Endothelial cell of umbilical vein (primary cell): ENCODE measurements at regions of chr12 and their contacts with region 1.

Region 1: GRCh38 chr12:49288412-49288853 is 6.5 kb upstream of the PRPH start:
- DNase-seq: peak; percentile 57
- H3K4me3 ChIP-seq: no peak overlapping the region
- H3K27ac ChIP-seq: no peak overlapping the region
- H3K4me1 ChIP-seq: peaks cover 2% of the 10 kb centered on the region
- H3K27me3 ChIP-seq: peaks cover 4 to 9% of the 10 kb centered on the region in 2 experiments
- CTCF ChIP-seq: peak; percentile 75 to 80
- POLR2A ChIP-seq: no peak

Region 2: DNA sequence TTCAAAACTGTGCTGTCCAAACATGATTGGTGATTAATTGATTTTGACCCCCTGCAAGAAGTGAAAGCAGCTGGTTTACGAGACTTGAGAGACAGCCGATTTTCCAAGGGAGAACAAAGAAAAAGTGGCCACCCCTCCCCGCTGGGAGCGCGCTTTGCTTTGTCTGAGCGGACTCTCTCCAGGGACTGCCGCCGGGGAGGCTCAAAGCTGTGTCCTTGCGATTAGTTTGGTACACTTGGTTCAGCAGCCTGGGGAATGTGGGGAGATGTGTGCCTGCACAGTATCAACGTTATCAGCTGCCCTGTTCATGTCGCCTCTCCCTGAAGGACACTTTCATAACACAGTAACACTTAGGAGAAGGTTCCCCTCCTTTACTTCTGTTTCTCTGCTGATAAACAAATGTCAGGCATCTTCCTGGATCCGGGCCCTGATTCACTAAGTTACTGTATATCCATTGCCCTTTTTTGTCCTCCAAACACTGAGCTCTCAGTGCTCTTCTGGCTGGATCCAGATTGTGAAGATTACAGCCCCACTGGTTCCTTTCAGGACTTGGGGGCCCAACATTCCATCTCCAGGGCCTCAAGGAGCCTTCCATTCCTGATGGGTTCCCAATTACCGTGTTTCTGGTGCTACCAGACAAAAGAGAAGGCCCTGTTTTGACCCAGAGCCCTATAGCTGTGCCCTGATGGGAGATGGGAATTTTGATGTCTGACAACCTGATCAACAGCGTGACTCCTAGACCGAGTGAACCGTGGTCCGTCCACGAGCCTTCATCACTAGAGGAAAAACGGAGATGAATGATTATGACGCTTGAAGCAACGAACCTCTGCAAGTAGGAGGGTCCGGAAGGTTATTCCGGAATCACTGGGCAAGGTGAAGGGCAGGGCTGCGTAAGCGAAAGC is 55.2 kb before region 1 on chr12:
- CTCF ChIA-PET with region 1: no interaction called
- POLR2A ChIA-PET with region 1: no interaction called
- dilution Hi-C with region 1: no loop called
- intact Hi-C with region 1: no loop called
- DNase-seq: peak; percentile 71
- H3K4me3 ChIP-seq: peak overlapping the region in 1 of 3 experiments; percentile 5
- H3K27ac ChIP-seq: no peak overlapping the region
- H3K4me1 ChIP-seq: peaks cover 12% of the 10 kb centered on the region
- H3K27me3 ChIP-seq: no peaks in the 10 kb centered on the region
- CTCF ChIP-seq: peak in 1 of 2 donors; percentile 34
- POLR2A ChIP-seq: no peak

Region 3: GRCh38 chr12:49244176-49244575 is 44.3 kb before region 1 on chr12:
- CTCF ChIA-PET with region 1: no interaction called
- POLR2A ChIA-PET with region 1: no interaction called
- dilution Hi-C with region 1: no loop called
- intact Hi-C with region 1: no loop called
- DNase-seq: no peak
- H3K4me3 ChIP-seq: no peak overlapping the region
- H3K27ac ChIP-seq: no peak overlapping the region
- H3K4me1 ChIP-seq: no peaks in the 10 kb centered on the region
- H3K27me3 ChIP-seq: no peaks in the 10 kb centered on the region
- CTCF ChIP-seq: no peak
- POLR2A ChIP-seq: no peak

Region 4: GRCh38 chr12:49276304-49277014 is 12.0 kb before region 1 on chr12:
- CTCF ChIA-PET with region 1: interaction called, 13 read pairs
- POLR2A ChIA-PET with region 1: no interaction called
- dilution Hi-C with region 1: no loop called
- intact Hi-C with region 1: no loop called
- DNase-seq: no peak
- H3K4me3 ChIP-seq: no peak overlapping the region
- H3K27ac ChIP-seq: no peak overlapping the region
- H3K4me1 ChIP-seq: no peaks in the 10 kb centered on the region
- H3K27me3 ChIP-seq: no peaks in the 10 kb centered on the region
- CTCF ChIP-seq: no peak
- POLR2A ChIP-seq: no peak

Region 5: GRCh38 chr12:49322708-49323523 is 34.5 kb after region 1 on chr12 and contains the start of gene TROAP:
- CTCF ChIA-PET with region 1: interaction called, 14 read pairs
- POLR2A ChIA-PET with region 1: no interaction called
- dilution Hi-C with region 1: no loop called
- intact Hi-C with region 1: no loop called
- DNase-seq: peak; percentile 99
- H3K4me3 ChIP-seq: peak within 1 kb of the TSS; percentile 59 to 90 (median 73)
- H3K27ac ChIP-seq: peak within 1 kb of the TSS; percentile 58
- H3K4me1 ChIP-seq: peaks cover 12% of the 10 kb centered on the region
- H3K27me3 ChIP-seq: no peaks in the 10 kb centered on the region
- CTCF ChIP-seq: no peak
- POLR2A ChIP-seq: peak; percentile 52
- total RNA-seq, gene TROAP: 62.4 and 68.6 TPM in 2 replicates

Region 6: DNA sequence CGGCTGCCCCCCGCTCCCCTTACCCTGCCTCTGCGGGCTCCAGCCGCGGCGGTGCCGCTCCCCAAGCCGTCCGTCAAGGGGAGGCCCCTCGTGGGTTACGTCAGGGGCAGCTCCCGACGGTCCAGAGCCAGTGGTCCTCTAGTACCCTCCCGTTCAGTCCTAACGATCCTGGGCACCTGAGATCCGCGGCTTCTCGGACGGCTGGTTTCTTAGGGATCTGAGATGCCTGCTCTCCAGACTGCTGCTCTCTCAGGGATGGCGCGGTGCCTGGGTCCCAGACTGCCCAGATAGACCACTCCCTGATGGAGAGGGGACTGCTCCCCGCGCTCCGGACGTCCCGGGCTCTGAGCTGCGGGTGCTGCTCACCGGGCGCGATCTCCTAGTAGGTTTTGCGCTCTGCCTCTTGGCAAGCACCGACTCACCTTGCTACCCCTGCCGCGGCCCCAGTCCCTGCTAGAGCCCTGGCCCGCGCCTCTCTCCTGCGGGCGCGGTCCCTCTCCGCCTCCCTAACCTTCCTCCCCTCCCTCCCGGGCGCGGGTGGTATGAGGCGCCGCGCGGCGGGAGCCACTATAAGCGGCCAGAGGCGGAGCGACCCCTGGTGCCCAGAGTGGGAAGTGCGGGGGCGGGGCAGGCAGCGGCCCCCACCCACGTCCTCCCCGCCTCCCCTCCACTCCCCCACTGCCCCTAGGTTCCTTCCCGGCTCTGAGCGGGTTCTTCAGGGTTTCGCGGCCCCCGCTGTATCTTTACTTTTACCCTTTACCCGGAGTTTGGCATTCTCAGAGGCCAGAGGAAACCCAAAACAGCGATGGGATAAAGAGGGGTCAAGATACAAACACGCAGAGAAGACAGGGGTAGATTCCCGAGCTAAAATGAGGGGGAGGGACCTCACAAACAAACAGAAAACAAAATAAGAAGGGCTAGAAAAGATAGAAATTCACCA is 48.5 kb after region 1 on chr12 and contains the start of gene C1QL4:
- CTCF ChIA-PET with region 1: interaction called, 58 read pairs
- POLR2A ChIA-PET with region 1: no interaction called
- dilution Hi-C with region 1: no loop called
- intact Hi-C with region 1: loop called (anchors 1 kb)
- DNase-seq: peak; percentile 69
- H3K4me3 ChIP-seq: peak within 1 kb of the TSS in 1 of 3 experiments; percentile 20
- H3K27ac ChIP-seq: no peak within 1 kb of the TSS
- H3K4me1 ChIP-seq: no peaks in the 10 kb centered on the region
- H3K27me3 ChIP-seq: peaks cover 59 to 70% of the 10 kb centered on the region in 2 experiments
- CTCF ChIP-seq: peak; percentile 64 to 97
- POLR2A ChIP-seq: no peak
- total RNA-seq, gene C1QL4: not detected in 2 replicates

Region 7: DNA sequence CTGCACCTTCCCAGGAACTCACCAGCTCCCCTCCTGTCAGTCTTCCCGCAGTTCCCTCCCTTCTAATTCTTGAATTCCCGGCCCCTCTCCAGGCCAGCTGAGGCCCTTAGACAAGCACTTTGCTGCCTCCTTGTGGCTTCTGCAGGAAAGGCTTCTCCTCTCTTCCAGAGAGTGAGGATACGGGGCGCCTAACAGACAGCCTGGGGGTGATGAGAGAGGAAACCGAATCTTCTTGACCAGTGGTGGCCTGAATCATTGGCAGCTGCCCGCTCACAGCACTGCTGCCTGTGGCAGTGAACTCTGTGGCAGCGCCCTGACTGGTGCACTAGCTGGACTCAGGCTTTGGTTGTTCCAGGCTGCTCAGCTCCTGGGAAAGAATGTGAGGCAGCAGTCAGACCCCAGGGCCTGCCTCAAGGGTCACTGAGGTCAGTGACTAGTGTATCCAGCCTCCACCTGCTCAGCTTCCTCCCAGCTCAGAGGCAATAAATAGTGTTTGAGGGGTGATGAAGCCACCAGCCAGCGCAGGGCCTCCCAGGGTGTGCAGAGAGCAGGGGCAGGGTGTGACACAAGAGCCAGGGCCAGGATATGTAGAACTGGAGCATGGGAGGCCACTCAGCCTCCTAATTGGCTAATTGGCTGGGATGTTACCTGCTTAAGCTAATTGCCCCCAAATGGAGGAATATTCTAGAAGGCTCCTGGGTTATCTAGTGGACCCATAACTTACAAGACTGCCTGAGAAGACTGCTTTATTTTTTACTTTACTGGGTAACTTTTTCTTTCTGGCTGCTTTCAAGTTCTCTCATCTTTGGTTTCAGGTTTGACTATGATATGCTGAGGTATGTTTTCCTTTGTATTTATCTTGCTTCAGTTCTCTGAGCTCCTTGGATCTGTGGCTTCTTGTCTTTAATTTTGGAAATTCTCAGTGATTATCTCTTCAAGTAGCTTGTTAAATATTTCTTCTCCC is 292.4 kb after region 1 on chr12:
- CTCF ChIA-PET with region 1: interaction called, 28 read pairs
- POLR2A ChIA-PET with region 1: no interaction called
- dilution Hi-C with region 1: no loop called
- intact Hi-C with region 1: loop called (anchors 2 kb)
- DNase-seq: peak; percentile 65
- H3K4me3 ChIP-seq: no peak overlapping the region
- H3K27ac ChIP-seq: no peak overlapping the region
- H3K4me1 ChIP-seq: no peaks in the 10 kb centered on the region
- H3K27me3 ChIP-seq: no peaks in the 10 kb centered on the region
- CTCF ChIP-seq: peak; percentile 89 to 90
- POLR2A ChIP-seq: no peak